ENCODE measurements at regions of chr3 and their contacts with region 1.

Region 1: GRCh38 chr3:47365213-47366153 is 15.3 kb upstream of the PTPN23 start:
- DNase-seq: no peak
- H3K4me3 Mint-ChIP-seq: no peak overlapping the region
- H3K27ac Mint-ChIP-seq: no peak overlapping the region
- H3K4me1 Mint-ChIP-seq: peaks cover 10% of the 10 kb centered on the region
- H3K27me3 Mint-ChIP-seq: peaks cover 5% of the 10 kb centered on the region

Region 2: DNA sequence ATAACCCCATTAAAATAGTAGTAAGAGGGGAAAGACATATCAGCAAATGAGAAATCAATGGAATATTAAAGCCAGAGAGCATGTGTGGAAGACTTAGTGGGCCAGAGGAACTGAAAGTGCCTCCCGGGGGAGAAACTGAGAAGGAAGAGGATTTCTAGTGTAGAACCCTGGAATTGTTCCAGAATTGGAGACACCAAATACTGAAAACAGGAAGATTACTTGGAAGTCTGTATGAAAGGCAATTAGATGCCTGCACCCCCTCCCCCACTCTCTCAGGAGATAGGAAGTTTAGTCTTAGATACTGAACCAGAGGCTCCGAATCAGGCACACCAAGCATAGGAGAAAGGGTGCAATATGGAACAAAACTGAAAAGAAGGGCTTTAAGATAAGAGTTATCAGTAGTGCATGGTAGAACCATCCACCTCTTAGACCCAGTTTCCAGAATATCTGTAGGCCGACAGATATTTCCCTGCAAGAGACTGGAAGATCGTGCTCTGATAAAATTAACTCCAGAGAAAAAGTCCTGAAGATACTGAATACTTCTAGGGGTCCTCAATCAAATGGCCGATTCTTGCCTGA is 50.3 kb before region 1 on chr3:
- CTCF ChIA-PET with region 1: no interaction called
- intact Hi-C with region 1: loop called (anchors 2 kb)
- DNase-seq: no peak
- H3K4me3 Mint-ChIP-seq: no peak overlapping the region
- H3K27ac Mint-ChIP-seq: no peak overlapping the region
- H3K4me1 Mint-ChIP-seq: peaks cover 13% of the 10 kb centered on the region
- H3K27me3 Mint-ChIP-seq: no peaks in the 10 kb centered on the region

Measured in activated naive CD4-positive, alpha-beta T cell treated with anti-CD3 and anti-CD28 coated beads for 36 hours (primary cell).